Activated CD4-positive, alpha-beta memory T cell treated with anti-CD3 and anti-CD28 coated beads, Interleukin-2, amount 10 ng/mL, durations not matched to agents 7 days and 5 days (primary cell): ENCODE measurements at regions of chr11 and their contacts with region 1.

Region 1: DNA sequence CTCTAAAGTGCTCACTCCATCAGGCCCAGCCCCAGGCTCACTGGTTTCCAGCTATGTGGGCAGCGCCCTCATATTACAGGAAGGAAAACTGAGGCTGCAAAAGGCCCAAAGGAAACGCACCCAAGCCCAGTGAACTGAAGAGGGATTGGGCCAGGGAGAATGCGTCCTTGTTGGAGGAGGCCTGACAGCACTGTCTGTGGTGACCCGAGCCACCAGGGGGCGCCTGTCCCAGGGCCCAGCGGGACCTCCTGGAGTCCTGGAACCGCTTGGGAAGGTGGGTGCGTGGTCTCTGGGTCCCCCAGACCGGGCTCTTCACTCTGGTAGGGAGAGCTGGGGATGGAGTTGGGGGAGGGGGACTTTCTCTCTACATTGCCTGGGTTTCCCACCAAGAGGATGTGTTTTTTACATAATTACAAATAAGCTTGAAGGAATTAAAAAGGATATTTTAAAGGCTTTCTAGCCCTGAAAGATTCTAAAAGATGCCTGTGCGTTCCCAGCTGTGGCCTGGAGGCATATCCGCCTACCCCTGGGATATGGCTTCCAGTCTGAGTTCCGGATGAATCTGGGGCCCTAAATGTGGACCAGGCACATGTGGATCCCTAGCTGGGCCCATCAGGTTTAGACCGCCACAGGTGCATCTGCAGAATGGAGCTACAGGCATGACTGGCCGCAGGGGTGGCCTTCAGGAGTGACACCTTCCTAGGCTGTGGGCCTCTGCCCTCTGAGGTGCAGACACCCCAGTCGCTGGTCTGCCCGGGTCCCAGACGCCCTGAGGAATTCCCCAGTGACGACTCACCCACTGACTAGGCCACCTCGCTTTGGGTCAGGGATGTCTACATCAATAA is 4.2 kb downstream of the SPI1 start:
- DNase-seq: peak; percentile 84
- H3K4me3 Mint-ChIP-seq: no peak overlapping the region
- H3K27ac Mint-ChIP-seq: no peak overlapping the region
- H3K4me1 Mint-ChIP-seq: peaks cover 2% of the 10 kb centered on the region
- H3K27me3 Mint-ChIP-seq: no peaks in the 10 kb centered on the region

Region 2: GRCh38 chr11:47387911-47388678 is 14.0 kb after region 1 on chr11:
- CTCF ChIA-PET with region 1: interaction called, 24 read pairs
- POLR2A ChIA-PET with region 1: interaction called, 13 read pairs
- DNase-seq: no peak
- H3K4me3 Mint-ChIP-seq: no peak overlapping the region
- H3K27ac Mint-ChIP-seq: no peak overlapping the region
- H3K4me1 Mint-ChIP-seq: peaks cover 20% of the 10 kb centered on the region
- H3K27me3 Mint-ChIP-seq: no peaks in the 10 kb centered on the region

Region 3: GRCh38 chr11:47399860-47400767 is 26.0 kb after region 1 on chr11:
- CTCF ChIA-PET with region 1: interaction called, 63 read pairs
- POLR2A ChIA-PET with region 1: interaction called, 13 read pairs
- DNase-seq: peak; percentile 44
- H3K4me3 Mint-ChIP-seq: peak overlapping the region; percentile 63
- H3K27ac Mint-ChIP-seq: no peak overlapping the region
- H3K4me1 Mint-ChIP-seq: peaks cover 22% of the 10 kb centered on the region
- H3K27me3 Mint-ChIP-seq: no peaks in the 10 kb centered on the region

Region 4: GRCh38 chr11:47426061-47426956 is 52.2 kb after region 1 on chr11 and contains the start of gene PSMC3:
- CTCF ChIA-PET with region 1: interaction called, 10 read pairs
- POLR2A ChIA-PET with region 1: interaction called, 3 read pairs
- DNase-seq: peak; percentile 99
- H3K4me3 Mint-ChIP-seq: peak within 1 kb of the TSS; percentile 97
- H3K27ac Mint-ChIP-seq: peak within 1 kb of the TSS; percentile 98
- H3K4me1 Mint-ChIP-seq: peaks cover 29% of the 10 kb centered on the region
- H3K27me3 Mint-ChIP-seq: no peaks in the 10 kb centered on the region
- total RNA-seq, gene PSMC3: 111 to 112 TPM

Region 5: GRCh38 chr11:47847892-47848635 is 474.0 kb after region 1 on chr11 and contains the start of gene NUP160:
- CTCF ChIA-PET with region 1: interaction called, 10 read pairs
- POLR2A ChIA-PET with region 1: no interaction called
- DNase-seq: peak; percentile 91
- H3K4me3 Mint-ChIP-seq: peak within 1 kb of the TSS; percentile 89
- H3K27ac Mint-ChIP-seq: peak within 1 kb of the TSS; percentile 94
- H3K4me1 Mint-ChIP-seq: peaks cover 49% of the 10 kb centered on the region
- H3K27me3 Mint-ChIP-seq: no peaks in the 10 kb centered on the region
- total RNA-seq, gene NUP160: 52.0 to 52.9 TPM